ENCODE measurements at regions of chr9 and their contacts with region 1.

Region 1: DNA sequence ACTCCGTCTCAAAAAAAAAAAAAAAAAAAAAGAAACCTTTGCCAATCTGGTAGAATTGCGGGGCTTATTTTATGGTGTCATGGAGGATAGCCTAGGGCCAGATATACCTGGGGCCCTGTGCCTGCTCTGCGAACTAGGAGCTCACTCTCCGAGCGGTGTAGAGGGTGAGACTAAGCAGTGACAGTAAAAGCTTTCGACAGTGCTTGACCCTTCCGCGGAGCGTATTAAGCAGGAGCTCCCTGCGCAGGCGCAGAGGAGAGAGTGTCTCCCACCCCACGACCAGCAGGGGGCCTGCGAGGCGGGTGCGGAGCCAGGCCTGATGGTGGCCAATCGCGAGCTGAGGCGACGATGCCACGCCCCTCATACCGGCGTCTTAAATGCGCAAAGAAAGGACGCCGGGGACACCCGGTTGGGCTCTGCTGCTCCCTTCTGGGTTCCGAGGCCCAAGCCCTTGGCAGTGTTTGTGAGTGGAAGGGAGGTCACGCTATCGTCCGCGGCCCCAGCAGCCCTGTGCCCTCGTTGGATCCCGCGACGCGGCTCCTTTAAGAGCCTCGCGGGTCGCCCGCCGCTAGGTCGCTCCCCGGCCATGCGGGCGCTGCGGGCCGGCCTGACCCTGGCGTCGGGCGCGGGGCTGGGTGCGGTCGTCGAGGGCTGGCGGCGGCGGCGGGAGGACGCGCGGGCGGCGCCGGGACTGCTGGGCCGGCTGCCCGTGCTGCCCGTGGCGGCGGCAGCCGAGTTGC is at the start of gene ENDOG:
- DNase-seq: peak; percentile 94
- ATAC-seq: peak; percentile 96
- H3K4me3 ChIP-seq: peak within 1 kb of the TSS; percentile 60
- H3K27ac ChIP-seq: peak within 1 kb of the TSS; percentile 60
- H3K4me1 ChIP-seq: peaks cover 7% of the 10 kb centered on the region; the same call in 1 of the 2 replicates
- H3K27me3 ChIP-seq: no peaks in the 10 kb centered on the region
- CTCF ChIP-seq: peak; percentile 92 to 100 (median 99)
- EP300 ChIP-seq: no peak
- POLR2A ChIP-seq: peak; percentile 82
- RAD21 ChIP-seq: peak; percentile 39; the same call in 1 of the 2 replicates
- polyA plus RNA-seq, gene ENDOG: 0.84 to 1.8 TPM

Region 2: GRCh38 chr9:128643519-128644300 is 174.6 kb before region 1 on chr9:
- CTCF ChIA-PET with region 1: no interaction called
- POLR2A ChIA-PET with region 1: interaction called, 5 read pairs
- RAD21 ChIA-PET with region 1: interaction called, 3 read pairs
- SMC1A ChIA-PET with region 1: no interaction called
- in situ Hi-C with region 1: no loop called
- intact Hi-C with region 1: loop called (anchors 10 kb)
- DNase-seq: peak; percentile 80
- ATAC-seq: peak; percentile 88
- H3K4me3 ChIP-seq: no peak overlapping the region
- H3K27ac ChIP-seq: peak overlapping the region; percentile 95
- H3K4me1 ChIP-seq: peaks cover 11% of the 10 kb centered on the region
- H3K27me3 ChIP-seq: no peaks in the 10 kb centered on the region
- CTCF ChIP-seq: no peak
- EP300 ChIP-seq: no peak
- POLR2A ChIP-seq: peak; percentile 73
- RAD21 ChIP-seq: no peak

Region 3: GRCh38 chr9:128733256-128733655 is 85.0 kb before region 1 on chr9:
- CTCF ChIA-PET with region 1: interaction called, 10 read pairs
- POLR2A ChIA-PET with region 1: no interaction called
- RAD21 ChIA-PET with region 1: interaction called, 8 read pairs
- SMC1A ChIA-PET with region 1: no interaction called
- in situ Hi-C with region 1: no loop called
- intact Hi-C with region 1: no loop called
- DNase-seq: no peak
- ATAC-seq: peak; percentile 64
- H3K4me3 ChIP-seq: no peak overlapping the region
- H3K27ac ChIP-seq: no peak overlapping the region
- H3K4me1 ChIP-seq: no peaks in the 10 kb centered on the region; the same call in 1 of the 2 replicates
- H3K27me3 ChIP-seq: no peaks in the 10 kb centered on the region
- CTCF ChIP-seq: peak; percentile 33 to 44 (median 39); a peak in 4 of 6 replicates
- EP300 ChIP-seq: no peak
- POLR2A ChIP-seq: no peak
- RAD21 ChIP-seq: 0 out of 2 replicates have a peak, but pooled peaks have one; percentile 7

Region 4: DNA sequence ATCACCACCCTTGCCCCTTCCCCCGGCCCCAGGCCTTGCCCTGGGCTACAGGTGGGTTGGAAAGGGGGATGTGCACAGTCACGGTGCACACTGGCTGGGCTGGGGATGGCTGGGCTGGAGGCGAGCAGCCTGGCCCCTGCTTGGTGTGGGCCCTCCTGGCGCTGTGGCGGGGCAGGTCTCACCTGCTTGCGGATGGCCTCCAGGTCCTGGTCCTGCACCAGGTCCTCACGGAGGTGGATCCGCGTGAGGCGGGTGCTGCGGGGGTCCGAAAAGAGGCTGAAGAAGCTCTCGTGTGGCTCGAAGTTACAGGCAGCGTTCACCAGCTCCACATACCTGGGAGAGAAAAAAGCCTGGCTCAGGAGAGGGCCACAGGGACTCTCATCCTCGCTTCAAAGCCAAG is 64.6 kb before region 1 on chr9:
- CTCF ChIA-PET with region 1: no interaction called
- POLR2A ChIA-PET with region 1: no interaction called
- RAD21 ChIA-PET with region 1: no interaction called
- SMC1A ChIA-PET with region 1: no interaction called
- in situ Hi-C with region 1: no loop called
- intact Hi-C with region 1: no loop called
- DNase-seq: no peak
- ATAC-seq: no peak
- H3K4me3 ChIP-seq: no peak overlapping the region
- H3K27ac ChIP-seq: no peak overlapping the region
- H3K4me1 ChIP-seq: no peaks in the 10 kb centered on the region
- H3K27me3 ChIP-seq: no peaks in the 10 kb centered on the region
- CTCF ChIP-seq: no peak
- EP300 ChIP-seq: no peak
- POLR2A ChIP-seq: no peak
- RAD21 ChIP-seq: no peak

Region 5: GRCh38 chr9:128771745-128772519 is 46.3 kb before region 1 on chr9 and contains the start of gene ZER1:
- CTCF ChIA-PET with region 1: interaction called, 5 read pairs
- POLR2A ChIA-PET with region 1: interaction called, 10 read pairs
- RAD21 ChIA-PET with region 1: interaction called, 3 read pairs
- SMC1A ChIA-PET with region 1: interaction called, 3 read pairs
- in situ Hi-C with region 1: no loop called
- intact Hi-C with region 1: no loop called
- DNase-seq: peak; percentile 24
- ATAC-seq: peak; percentile 96
- H3K4me3 ChIP-seq: peak within 1 kb of the TSS; percentile 81
- H3K27ac ChIP-seq: peak within 1 kb of the TSS; percentile 90
- H3K4me1 ChIP-seq: no peaks in the 10 kb centered on the region
- H3K27me3 ChIP-seq: no peaks in the 10 kb centered on the region
- CTCF ChIP-seq: peak in 1 of 3 experiments; percentile 9; a peak in 2 of 6 replicates
- EP300 ChIP-seq: no peak
- POLR2A ChIP-seq: peak; percentile 84
- RAD21 ChIP-seq: peak; percentile 10; the same call in 1 of the 2 replicates
- polyA plus RNA-seq, gene ZER1: 0.32 to 0.47 TPM

Region 6: GRCh38 chr9:128829477-128830251 is 11.4 kb after region 1 on chr9 and contains the start of gene SPOUT1:
- CTCF ChIA-PET with region 1: interaction called, 29 read pairs
- POLR2A ChIA-PET with region 1: interaction called, 15 read pairs
- RAD21 ChIA-PET with region 1: interaction called, 12 read pairs
- SMC1A ChIA-PET with region 1: interaction called, 8 read pairs
- in situ Hi-C with region 1: no loop called
- intact Hi-C with region 1: no loop called
- DNase-seq: peak; percentile 77
- ATAC-seq: peak; percentile 99
- H3K4me3 ChIP-seq: peak within 1 kb of the TSS; percentile 92
- H3K27ac ChIP-seq: peak within 1 kb of the TSS; percentile 72
- H3K4me1 ChIP-seq: peaks cover 7% of the 10 kb centered on the region; the same call in 1 of the 2 replicates
- H3K27me3 ChIP-seq: no peaks in the 10 kb centered on the region
- CTCF ChIP-seq: no peak
- EP300 ChIP-seq: no peak
- POLR2A ChIP-seq: peak; percentile 98
- RAD21 ChIP-seq: no peak
- polyA plus RNA-seq, gene SPOUT1: 5.7 to 16.4 TPM